Activated B cell treated with CpG ODN at 0.5 μM for 24 hours (primary cell): ENCODE measurements at regions of chr1 and their contacts with region 1.

Region 1: GRCh38 chr1:108746372-108747205 is at the start of gene STXBP3:
- DNase-seq: peak; percentile 99
- ATAC-seq: peak; percentile 92
- H3K4me3 Mint-ChIP-seq: peak within 1 kb of the TSS; percentile 99
- H3K27ac Mint-ChIP-seq: peak within 1 kb of the TSS; percentile 99
- H3K4me1 Mint-ChIP-seq: peaks cover 28% of the 10 kb centered on the region
- H3K27me3 Mint-ChIP-seq: no peaks in the 10 kb centered on the region
- CTCF ChIP-seq: peak; percentile 93
- total RNA-seq, gene STXBP3: 46.4 and 50.2 TPM in 2 replicates

Region 2: DNA sequence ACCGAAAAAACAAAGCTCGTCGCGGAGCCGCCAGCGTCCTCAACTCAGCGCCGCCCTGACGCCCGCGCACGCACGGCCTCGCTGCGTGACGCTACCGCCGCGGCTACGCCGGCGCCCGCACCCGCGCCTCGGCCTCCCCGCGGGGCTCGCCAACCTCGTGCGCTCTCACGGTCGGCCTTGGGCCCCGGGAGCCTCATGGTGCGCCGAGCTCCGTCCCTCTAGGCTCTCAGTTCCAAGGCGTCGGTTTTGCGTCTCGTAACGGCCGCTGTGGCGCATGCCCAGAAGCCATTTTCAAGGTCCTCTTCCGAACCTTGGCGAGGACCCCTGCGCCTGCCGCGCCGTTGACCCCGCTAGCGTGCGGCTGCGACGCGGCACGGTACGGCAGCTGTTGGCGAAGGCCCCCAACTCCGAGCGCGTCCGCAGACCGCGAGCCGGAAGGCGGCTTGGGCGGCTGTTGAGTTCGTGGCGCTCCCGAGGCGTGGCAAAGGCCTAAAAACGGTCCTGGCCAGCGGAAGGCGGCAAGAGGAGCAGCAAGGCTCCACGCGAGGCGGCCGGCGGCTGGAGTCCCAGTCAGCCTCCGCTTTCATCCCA is 85.5 kb before region 1 on chr1 and contains the start of gene HENMT1:
- CTCF ChIA-PET with region 1: no interaction called
- POLR2A ChIA-PET with region 1: interaction called, 5 read pairs
- intact Hi-C with region 1: loop called (anchors 1 kb)
- DNase-seq: peak; percentile 75
- ATAC-seq: peak; percentile 82
- H3K4me3 Mint-ChIP-seq: peak within 1 kb of the TSS; percentile 86
- H3K27ac Mint-ChIP-seq: peak within 1 kb of the TSS; percentile 90
- H3K4me1 Mint-ChIP-seq: peaks cover 12% of the 10 kb centered on the region
- H3K27me3 Mint-ChIP-seq: no peaks in the 10 kb centered on the region
- CTCF ChIP-seq: no peak
- total RNA-seq, gene HENMT1: 6.1 and 6.4 TPM in 2 replicates

Region 3: GRCh38 chr1:108897865-108898720 is 151.5 kb after region 1 on chr1:
- CTCF ChIA-PET with region 1: interaction called, 6 read pairs
- POLR2A ChIA-PET with region 1: no interaction called
- intact Hi-C with region 1: loop called (anchors 1 kb)
- DNase-seq: no peak
- ATAC-seq: peak; percentile 66
- H3K4me3 Mint-ChIP-seq: no peak overlapping the region
- H3K27ac Mint-ChIP-seq: no peak overlapping the region
- H3K4me1 Mint-ChIP-seq: no peaks in the 10 kb centered on the region
- H3K27me3 Mint-ChIP-seq: no peaks in the 10 kb centered on the region
- CTCF ChIP-seq: peak; percentile 36

Region 4: GRCh38 chr1:109041621-109042468 is 295.3 kb after region 1 on chr1 and contains the start of gene WDR47:
- CTCF ChIA-PET with region 1: no interaction called
- POLR2A ChIA-PET with region 1: no interaction called
- intact Hi-C with region 1: loop called (anchors 1 kb)
- DNase-seq: peak; percentile 89
- ATAC-seq: peak; percentile 96
- H3K4me3 Mint-ChIP-seq: peak within 1 kb of the TSS; percentile 88
- H3K27ac Mint-ChIP-seq: peak within 1 kb of the TSS; percentile 60
- H3K4me1 Mint-ChIP-seq: peaks cover 15% of the 10 kb centered on the region
- H3K27me3 Mint-ChIP-seq: no peaks in the 10 kb centered on the region
- CTCF ChIP-seq: no peak
- total RNA-seq, gene WDR47: 10.3 and 10.9 TPM in 2 replicates